Spleen (tissue), 13 donors: ENCODE measurements at regions of chr20 and their contacts with region 1.

Region 1: GRCh38 chr20:8722276-8722928 is 346.5 kb upstream of the PLCB4 start:
- DNase-seq: no peak
- H3K4me3 ChIP-seq: no peak overlapping the region
- H3K27ac ChIP-seq: no peak overlapping the region
- H3K4me1 ChIP-seq: peaks cover 0 to 6% (median 0%) of the 10 kb centered on the region in 6 donors
- H3K27me3 ChIP-seq: peaks cover 0 to 4% (median 0%) of the 10 kb centered on the region in 7 donors
- CTCF ChIP-seq: peak; percentile 55 to 90 (median 74)
- POLR2A ChIP-seq: no peak

Region 2: DNA sequence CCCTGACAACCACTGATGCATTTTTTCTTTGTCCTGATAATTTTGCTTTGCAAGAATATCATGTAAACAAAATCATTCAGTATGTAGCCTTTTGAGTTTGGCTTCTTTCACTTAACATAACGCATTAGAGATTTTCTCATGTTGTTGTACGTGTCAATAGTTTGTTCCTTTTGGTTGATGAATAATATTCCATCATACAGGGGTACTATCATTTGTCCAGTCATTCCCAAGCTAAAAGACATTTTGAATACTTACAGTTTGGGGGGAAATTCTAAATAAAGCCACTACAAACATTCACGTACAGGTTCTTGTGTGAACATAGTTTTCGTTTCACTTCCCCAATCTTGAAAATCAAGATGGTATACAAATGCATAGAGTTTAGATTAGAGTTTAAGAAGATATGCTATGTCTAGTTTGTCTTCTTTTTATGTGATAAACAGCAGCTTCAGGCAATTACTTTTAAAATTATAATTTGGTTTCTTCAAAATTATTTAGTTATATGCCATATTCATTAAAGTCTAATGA is 787.3 kb before region 1 on chr20:
- intact Hi-C with region 1: loop called (anchors 5 kb)
- DNase-seq: no peak
- H3K4me3 ChIP-seq: no peak overlapping the region
- H3K27ac ChIP-seq: no peak overlapping the region
- H3K4me1 ChIP-seq: peaks cover 0 to 10% (median 0%) of the 10 kb centered on the region in 6 donors
- H3K27me3 ChIP-seq: no peaks in the 10 kb centered on the region
- CTCF ChIP-seq: no peak
- POLR2A ChIP-seq: no peak

Region 3: DNA sequence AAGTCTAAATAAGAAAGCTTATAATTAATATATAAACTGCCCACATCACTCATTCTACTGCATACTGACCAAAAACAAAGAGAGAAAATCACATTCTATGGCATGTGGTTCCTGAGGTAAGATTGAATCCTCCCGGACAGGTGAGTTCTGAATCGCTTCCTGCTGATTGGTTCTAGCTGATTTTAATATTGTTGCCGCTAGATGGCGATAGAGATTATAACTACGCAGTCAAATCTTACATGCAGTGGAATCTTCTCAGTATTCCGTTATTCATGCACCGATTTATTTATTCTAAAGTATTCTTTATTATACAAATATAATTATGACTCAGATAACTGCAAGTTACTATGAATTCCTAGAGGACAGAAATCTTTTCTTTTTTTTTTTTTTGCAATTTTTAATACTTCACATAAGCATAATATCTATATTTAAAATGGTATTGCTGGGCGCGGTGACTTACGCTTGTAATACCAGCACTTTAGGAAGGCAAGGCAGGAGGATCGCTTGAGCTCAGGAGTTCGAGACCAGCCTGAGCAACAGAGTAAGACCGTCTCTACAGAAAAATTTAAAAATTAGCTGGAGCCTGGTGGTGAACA is 678.6 kb before region 1 on chr20:
- intact Hi-C with region 1: loop called (anchors 5 kb)
- DNase-seq: no peak
- H3K4me3 ChIP-seq: no peak overlapping the region
- H3K27ac ChIP-seq: no peak overlapping the region
- H3K4me1 ChIP-seq: peaks cover 0 to 7% (median 6%) of the 10 kb centered on the region in 6 donors
- H3K27me3 ChIP-seq: peaks cover 0 to 14% (median 0%) of the 10 kb centered on the region in 7 donors
- CTCF ChIP-seq: peak; percentile 39 to 82 (median 65)
- POLR2A ChIP-seq: no peak

Region 4: GRCh38 chr20:8131598-8132483 is 590.6 kb before region 1 on chr20 and contains the start of gene PLCB1:
- intact Hi-C with region 1: loop called (anchors 5 kb)
- DNase-seq: peak; percentile 95
- H3K4me3 ChIP-seq: peak within 1 kb of the TSS; percentile 59 to 90 (median 68)
- H3K27ac ChIP-seq: peak within 1 kb of the TSS; percentile 38 to 86 (median 75)
- H3K4me1 ChIP-seq: peaks cover 5 to 36% (median 27%) of the 10 kb centered on the region in 6 donors
- H3K27me3 ChIP-seq: peaks cover 0 to 44% (median 4%) of the 10 kb centered on the region in 7 donors
- CTCF ChIP-seq: peak; percentile 70 to 93 (median 86)
- POLR2A ChIP-seq: no peak
- total RNA-seq, gene PLCB1: 14.8 to 33.7 (median 18.7) TPM